Activated naive CD4-positive, alpha-beta T cell treated with anti-CD3 and anti-CD28 coated beads for 36 hours (primary cell): ENCODE measurements at regions of chr1 and their contacts with region 1.

Region 1: DNA sequence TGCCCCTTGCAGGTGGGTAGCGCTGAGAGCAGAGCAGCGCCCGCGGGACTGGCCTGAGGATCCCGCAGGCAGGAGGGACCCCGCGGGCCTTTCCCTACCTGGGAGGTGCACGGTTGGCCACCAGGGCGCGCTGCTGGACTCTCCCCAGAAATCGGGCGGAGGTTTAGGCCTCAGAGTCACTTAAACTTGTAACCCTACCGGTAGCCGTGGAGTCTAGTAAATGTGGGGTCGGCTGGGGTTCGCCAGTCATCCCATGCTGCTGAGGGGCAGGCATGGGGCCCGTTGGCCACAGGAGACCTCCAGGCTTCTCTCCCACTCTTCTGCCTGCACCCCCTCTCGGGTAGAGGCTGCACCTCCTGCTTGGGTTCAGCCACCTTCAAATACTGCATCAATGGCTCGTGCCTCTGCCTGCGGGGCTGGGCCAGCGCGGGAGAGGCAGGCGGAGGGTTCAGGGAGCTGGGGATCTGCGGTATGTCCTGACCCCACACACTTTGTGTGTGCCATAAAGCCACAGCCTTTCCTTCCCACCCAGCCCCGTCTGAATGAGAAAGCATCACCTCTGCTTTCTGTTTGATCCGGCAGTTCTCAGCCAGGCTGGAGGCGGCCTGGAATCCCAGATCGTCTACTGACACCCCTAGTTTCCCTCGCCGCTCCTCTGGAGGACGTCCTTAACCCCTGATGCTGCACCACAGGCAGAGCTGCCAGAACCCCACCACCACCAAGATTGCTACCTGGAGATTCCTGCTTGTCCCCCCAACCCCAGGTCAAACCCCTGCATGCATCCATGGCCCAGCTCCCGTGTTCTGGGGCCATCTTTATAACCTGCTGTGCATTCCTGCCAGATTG is 12.3 kb upstream of the GSTM4 start:
- DNase-seq: peak; percentile 94
- H3K4me3 Mint-ChIP-seq: no peak overlapping the region
- H3K27ac Mint-ChIP-seq: no peak overlapping the region
- H3K4me1 Mint-ChIP-seq: peaks cover 5% of the 10 kb centered on the region
- H3K27me3 Mint-ChIP-seq: no peaks in the 10 kb centered on the region

Region 2: DNA sequence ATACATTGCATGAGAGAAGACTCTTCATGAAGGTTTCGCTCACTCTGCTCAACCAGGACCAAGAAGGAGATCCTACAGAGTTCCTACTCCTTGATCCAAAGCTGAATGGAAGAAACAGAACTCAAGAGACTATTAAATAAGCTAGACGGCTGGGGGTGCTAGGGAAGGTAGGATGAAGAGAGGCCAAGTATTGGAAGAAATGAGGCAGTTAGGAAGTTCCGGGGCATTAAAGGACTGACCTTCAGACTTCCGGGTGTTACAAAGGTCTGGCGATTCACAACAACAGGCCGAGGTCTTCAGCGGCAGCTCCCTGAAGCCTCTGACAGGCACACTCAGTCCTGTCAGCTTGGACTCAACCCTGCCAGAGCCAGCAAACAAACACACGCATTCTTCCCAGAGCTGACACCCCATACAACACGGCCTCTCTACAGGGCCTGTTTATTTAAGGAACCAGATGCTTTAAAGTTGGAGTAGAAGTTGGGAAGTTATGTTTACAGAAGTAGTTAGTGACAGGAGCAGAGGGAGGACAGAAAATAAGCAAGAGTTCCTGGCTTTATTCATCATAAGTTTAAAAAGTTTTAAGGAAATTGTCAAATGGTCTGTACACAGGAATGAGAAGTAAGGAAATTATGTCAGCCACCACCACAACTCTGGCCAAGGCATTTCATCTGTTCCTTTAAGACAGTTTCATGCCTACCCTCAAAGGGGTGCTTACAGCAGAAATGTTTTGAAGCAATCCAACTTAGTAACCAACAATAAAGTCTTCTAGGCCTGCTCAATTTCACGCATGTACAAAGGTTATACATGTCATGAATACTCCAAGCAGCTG is 250.6 kb before region 1 on chr1:
- CTCF ChIA-PET with region 1: no interaction called
- intact Hi-C with region 1: no loop called
- DNase-seq: no peak
- H3K4me3 Mint-ChIP-seq: no peak overlapping the region
- H3K27ac Mint-ChIP-seq: no peak overlapping the region
- H3K4me1 Mint-ChIP-seq: peaks cover 12% of the 10 kb centered on the region
- H3K27me3 Mint-ChIP-seq: peaks cover 60% of the 10 kb centered on the region

Region 3: GRCh38 chr1:109559995-109560394 is 83.6 kb before region 1 on chr1:
- CTCF ChIA-PET with region 1: interaction called, 12 read pairs
- intact Hi-C with region 1: no loop called
- DNase-seq: no peak
- H3K4me3 Mint-ChIP-seq: no peak overlapping the region
- H3K27ac Mint-ChIP-seq: no peak overlapping the region
- H3K4me1 Mint-ChIP-seq: peaks cover 67% of the 10 kb centered on the region
- H3K27me3 Mint-ChIP-seq: no peaks in the 10 kb centered on the region

Region 4: GRCh38 chr1:109630081-109630897 is 13.3 kb before region 1 on chr1:
- CTCF ChIA-PET with region 1: interaction called, 34 read pairs
- intact Hi-C with region 1: no loop called
- DNase-seq: peak; percentile 58
- H3K4me3 Mint-ChIP-seq: no peak overlapping the region
- H3K27ac Mint-ChIP-seq: no peak overlapping the region
- H3K4me1 Mint-ChIP-seq: peaks cover 11% of the 10 kb centered on the region
- H3K27me3 Mint-ChIP-seq: no peaks in the 10 kb centered on the region

Region 5: GRCh38 chr1:109669246-109669938 is 25.8 kb after region 1 on chr1:
- CTCF ChIA-PET with region 1: interaction called, 13 read pairs
- intact Hi-C with region 1: no loop called
- DNase-seq: peak; percentile 12
- H3K4me3 Mint-ChIP-seq: no peak overlapping the region
- H3K27ac Mint-ChIP-seq: no peak overlapping the region
- H3K4me1 Mint-ChIP-seq: peaks cover 17% of the 10 kb centered on the region
- H3K27me3 Mint-ChIP-seq: no peaks in the 10 kb centered on the region

Region 6: DNA sequence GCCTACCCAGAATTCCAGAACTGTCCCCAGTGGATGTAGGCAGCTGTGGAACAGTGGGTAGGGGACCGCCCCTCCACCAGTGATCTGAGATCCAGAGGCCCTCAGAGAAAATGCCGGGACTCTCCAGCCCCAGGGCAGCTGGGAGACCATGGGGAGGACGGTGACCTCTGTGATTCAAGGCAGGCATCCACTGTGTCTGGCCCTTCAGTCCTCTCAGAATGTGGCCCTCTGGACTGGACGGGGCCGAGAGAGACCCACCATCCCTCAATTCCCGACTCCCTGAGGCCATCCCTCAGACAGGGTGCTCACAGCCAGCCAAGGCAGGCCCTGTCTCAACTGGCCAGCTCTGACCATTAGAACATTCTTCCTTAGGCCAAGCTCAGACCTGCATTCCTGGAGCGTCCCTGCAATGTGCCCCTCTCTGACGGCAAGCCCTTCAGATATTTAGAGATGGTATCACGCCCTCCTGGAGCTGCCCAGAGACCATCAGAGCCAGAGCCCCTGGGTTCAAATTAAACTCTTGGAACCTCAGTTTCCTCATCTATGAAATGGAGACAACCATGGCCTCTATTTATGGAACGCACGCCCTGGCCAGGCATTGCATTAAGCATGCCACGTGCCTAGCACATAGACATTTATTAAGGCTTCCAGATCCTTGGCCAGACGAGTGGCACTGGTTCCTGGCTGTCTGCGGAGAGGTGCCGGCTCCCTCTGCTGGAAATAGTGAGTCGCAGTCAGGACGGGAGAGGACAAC is 129.7 kb after region 1 on chr1:
- CTCF ChIA-PET with region 1: interaction called, 283 read pairs
- intact Hi-C with region 1: loop called (anchors 1 kb)
- DNase-seq: peak; percentile 85
- H3K4me3 Mint-ChIP-seq: no peak overlapping the region
- H3K27ac Mint-ChIP-seq: no peak overlapping the region
- H3K4me1 Mint-ChIP-seq: no peaks in the 10 kb centered on the region
- H3K27me3 Mint-ChIP-seq: no peaks in the 10 kb centered on the region

Region 7: GRCh38 chr1:110011527-110012041 is 368.0 kb after region 1 on chr1:
- CTCF ChIA-PET with region 1: interaction called, 10 read pairs
- intact Hi-C with region 1: no loop called
- DNase-seq: peak; percentile 51
- H3K4me3 Mint-ChIP-seq: no peak overlapping the region
- H3K27ac Mint-ChIP-seq: no peak overlapping the region
- H3K4me1 Mint-ChIP-seq: no peaks in the 10 kb centered on the region
- H3K27me3 Mint-ChIP-seq: no peaks in the 10 kb centered on the region

Region 8: DNA sequence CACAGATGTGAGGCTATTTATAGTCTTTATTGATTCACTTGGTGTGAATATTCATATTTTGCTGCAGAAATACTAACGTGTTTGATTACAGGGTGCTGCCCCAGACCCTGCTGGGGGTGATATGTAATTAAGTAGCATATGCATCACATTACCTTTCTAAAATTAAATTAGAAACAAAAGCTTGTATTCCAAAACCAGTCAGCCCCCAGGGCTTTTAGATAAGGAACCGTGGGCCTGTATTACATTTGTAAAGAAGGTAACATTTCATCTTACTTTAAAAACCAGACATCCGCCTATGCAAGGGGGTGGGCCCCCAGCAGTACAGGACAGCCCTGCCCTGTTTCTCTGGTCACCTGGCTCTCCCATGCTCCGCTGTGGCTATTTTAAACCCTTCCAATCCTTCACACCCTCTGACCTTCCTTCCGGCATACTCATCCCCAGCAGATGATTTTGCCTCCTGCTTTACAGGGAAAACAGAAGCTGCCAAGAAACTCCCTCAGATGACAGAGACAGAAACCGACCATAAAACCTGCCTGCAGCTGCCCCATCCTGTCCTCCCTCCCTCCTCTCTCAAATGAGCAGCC is 544.5 kb after region 1 on chr1:
- CTCF ChIA-PET with region 1: no interaction called
- intact Hi-C with region 1: no loop called
- DNase-seq: no peak
- H3K4me3 Mint-ChIP-seq: no peak overlapping the region
- H3K27ac Mint-ChIP-seq: no peak overlapping the region
- H3K4me1 Mint-ChIP-seq: peaks cover 4% of the 10 kb centered on the region
- H3K27me3 Mint-ChIP-seq: peaks cover 3% of the 10 kb centered on the region